H1 (cell line): ENCODE measurements at regions of chr6 and their contacts with region 1.

Region 1: DNA sequence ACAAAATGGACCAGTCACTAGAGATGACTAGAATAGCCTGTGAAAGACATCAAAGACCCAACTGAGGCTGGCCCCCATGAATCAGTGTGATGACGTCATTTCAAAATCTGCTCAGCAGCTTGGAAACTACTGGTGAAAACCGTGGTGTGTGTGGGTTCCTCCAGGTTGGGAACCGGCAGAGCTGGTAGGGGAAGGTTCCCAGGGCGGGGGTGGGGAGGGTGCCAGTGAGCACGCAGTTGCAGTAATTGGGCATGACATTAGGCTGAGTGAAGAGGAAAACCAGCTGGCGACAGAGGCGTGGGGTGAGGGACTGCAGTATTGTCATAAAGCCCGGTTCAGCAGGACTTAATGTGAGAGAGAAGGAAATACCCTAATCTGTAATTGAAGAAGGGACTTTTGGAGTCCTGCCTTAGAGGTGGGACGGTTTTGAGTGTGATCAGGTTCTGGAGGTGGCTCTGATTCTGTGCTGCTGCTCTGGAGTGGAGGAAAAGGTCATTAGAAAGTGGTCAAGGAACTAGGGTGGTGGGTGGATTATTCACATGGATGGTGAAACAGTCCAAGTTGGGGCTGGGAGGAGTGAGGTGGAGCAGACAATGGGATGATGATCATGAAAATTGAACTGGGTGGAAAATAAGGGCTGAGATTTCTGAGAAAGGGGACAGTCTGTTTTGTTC is 52.0 kb upstream of the MTHFD1L start:
- DNase-seq: no peak
- H3K4me3 ChIP-seq: no peak overlapping the region
- H3K27ac ChIP-seq: no peak overlapping the region
- H3K4me1 ChIP-seq: 0 out of 7 replicates have a peak, but pooled peaks cover 0 to 2% (median 0%) of the 10 kb centered on the region in 4 experiments
- H3K27me3 ChIP-seq: no peaks in the 10 kb centered on the region; a peak in 1 of 7 replicates
- CTCF ChIP-seq: no peak
- EP300 ChIP-seq: no peak
- POLR2A ChIP-seq: no peak
- RAD21 ChIP-seq: no peak

Region 2: GRCh38 chr6:150395398-150396009 is 418.0 kb before region 1 on chr6:
- CTCF ChIA-PET with region 1: interaction called, 21 read pairs
- POLR2A ChIA-PET with region 1: no interaction called
- DNase-seq: peak; percentile 51 to 53
- H3K4me3 ChIP-seq: no peak overlapping the region
- H3K27ac ChIP-seq: no peak overlapping the region
- H3K4me1 ChIP-seq: no peaks in the 10 kb centered on the region; a peak in 1 of 7 replicates
- H3K27me3 ChIP-seq: no peaks in the 10 kb centered on the region
- CTCF ChIP-seq: peak; percentile 43 to 79 (median 73)
- EP300 ChIP-seq: no peak
- POLR2A ChIP-seq: no peak
- RAD21 ChIP-seq: peak; percentile 83 to 90

Region 3: DNA sequence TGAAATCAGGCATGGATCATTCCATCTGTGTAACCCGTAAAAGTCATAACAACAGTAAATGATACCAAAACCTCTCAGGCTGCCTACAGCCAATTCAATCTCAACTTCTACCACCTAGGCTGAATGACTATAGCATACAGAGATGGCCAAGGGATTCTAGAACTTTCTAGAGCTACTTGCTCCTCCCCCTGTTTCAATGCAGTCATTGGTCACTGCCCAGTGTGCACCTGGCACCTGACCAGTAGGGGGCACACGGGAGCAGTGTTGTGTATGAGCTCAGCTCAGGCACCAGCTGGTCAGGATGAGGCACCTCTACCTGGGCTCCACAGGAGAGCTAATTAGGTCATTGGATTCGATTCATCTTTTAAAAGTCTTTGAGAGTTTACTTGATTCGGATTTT is 127.6 kb before region 1 on chr6:
- CTCF ChIA-PET with region 1: interaction called, 38 read pairs
- POLR2A ChIA-PET with region 1: interaction called, 3 read pairs
- DNase-seq: peak; percentile 64 to 89
- H3K4me3 ChIP-seq: no peak overlapping the region
- H3K27ac ChIP-seq: no peak overlapping the region
- H3K4me1 ChIP-seq: no peaks in the 10 kb centered on the region
- H3K27me3 ChIP-seq: no peaks in the 10 kb centered on the region
- CTCF ChIP-seq: peak; percentile 85 to 99 (median 99)
- EP300 ChIP-seq: no peak
- POLR2A ChIP-seq: no peak
- RAD21 ChIP-seq: peak; percentile 77 to 87

Region 4: DNA sequence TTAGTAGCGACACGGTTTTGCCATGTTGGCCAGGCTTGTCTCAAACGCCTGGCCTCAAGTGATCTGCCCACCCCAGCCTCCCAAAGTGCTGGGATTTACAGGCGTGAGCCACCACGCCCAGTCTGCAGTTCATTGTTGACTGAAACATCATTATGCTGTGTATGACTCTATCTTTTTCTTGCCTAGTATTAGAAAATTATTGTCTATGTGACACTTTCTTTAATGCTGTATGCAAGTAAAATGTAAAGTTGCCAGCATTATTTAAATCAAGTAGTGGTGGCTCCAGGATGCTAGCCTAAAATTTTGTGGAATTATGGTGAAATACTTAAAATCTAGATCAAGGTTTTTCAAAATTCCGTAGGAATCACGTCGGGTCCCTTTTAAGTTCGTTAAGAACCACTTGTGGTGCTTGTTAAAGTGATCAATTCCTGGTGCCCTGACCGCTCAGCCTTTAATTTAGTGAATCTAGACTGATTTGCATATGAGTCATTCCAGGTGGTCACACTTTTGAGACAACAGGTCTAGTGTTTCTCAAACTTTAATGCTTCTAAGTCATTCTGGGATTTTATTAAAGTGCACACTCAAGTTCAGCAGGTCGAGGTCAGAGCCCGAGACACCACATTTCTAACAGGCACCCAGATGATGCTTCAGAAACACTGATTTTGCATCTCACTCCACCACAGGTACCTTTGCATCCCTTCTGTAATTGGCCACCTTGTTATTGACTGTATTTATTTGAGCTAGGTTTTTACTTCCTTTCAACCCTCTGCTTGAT is 80.5 kb before region 1 on chr6:
- CTCF ChIA-PET with region 1: no interaction called
- POLR2A ChIA-PET with region 1: no interaction called
- DNase-seq: no peak
- H3K4me3 ChIP-seq: no peak overlapping the region
- H3K27ac ChIP-seq: no peak overlapping the region
- H3K4me1 ChIP-seq: no peaks in the 10 kb centered on the region
- H3K27me3 ChIP-seq: no peaks in the 10 kb centered on the region
- CTCF ChIP-seq: no peak
- EP300 ChIP-seq: no peak
- POLR2A ChIP-seq: no peak
- RAD21 ChIP-seq: no peak

Region 5: DNA sequence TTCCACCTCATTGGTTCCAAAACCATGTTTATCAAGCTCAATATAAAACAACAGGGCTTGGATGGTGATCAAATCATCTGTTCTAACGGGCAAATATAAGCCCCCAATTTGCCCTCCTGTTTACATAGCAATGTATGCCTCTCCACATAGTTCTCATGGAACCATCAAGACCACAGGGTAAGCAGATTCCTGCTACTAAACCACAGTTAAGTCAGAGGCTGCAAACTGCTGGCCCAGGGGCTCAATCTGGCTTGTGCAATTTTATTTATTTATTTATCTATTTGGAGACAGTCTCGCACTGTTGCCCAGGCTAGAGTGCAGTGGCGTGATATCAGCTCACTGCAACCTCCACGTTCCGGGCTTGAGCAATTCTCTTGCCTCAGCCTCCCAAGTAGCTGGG is 33.2 kb after region 1 on chr6:
- CTCF ChIA-PET with region 1: interaction called, 27 read pairs
- POLR2A ChIA-PET with region 1: no interaction called
- DNase-seq: no peak
- H3K4me3 ChIP-seq: no peak overlapping the region
- H3K27ac ChIP-seq: no peak overlapping the region
- H3K4me1 ChIP-seq: no peaks in the 10 kb centered on the region; a peak in 1 of 7 replicates
- H3K27me3 ChIP-seq: no peaks in the 10 kb centered on the region
- CTCF ChIP-seq: no peak
- EP300 ChIP-seq: no peak
- POLR2A ChIP-seq: no peak
- RAD21 ChIP-seq: no peak

Region 6: GRCh38 chr6:150876598-150876997 is 63.1 kb after region 1 on chr6:
- CTCF ChIA-PET with region 1: interaction called, 33 read pairs
- POLR2A ChIA-PET with region 1: interaction called, 3 read pairs
- DNase-seq: no peak
- H3K4me3 ChIP-seq: no peak overlapping the region
- H3K27ac ChIP-seq: no peak overlapping the region
- H3K4me1 ChIP-seq: peaks cover 2 to 21% (median 11%) of the 10 kb centered on the region in 4 experiments; a peak in 6 of 7 replicates
- H3K27me3 ChIP-seq: no peaks in the 10 kb centered on the region
- CTCF ChIP-seq: no peak
- EP300 ChIP-seq: no peak
- POLR2A ChIP-seq: no peak
- RAD21 ChIP-seq: no peak

Region 7: GRCh38 chr6:150928882-150929281 is 115.4 kb after region 1 on chr6:
- CTCF ChIA-PET with region 1: interaction called, 10 read pairs
- POLR2A ChIA-PET with region 1: no interaction called
- DNase-seq: no peak
- H3K4me3 ChIP-seq: no peak overlapping the region
- H3K27ac ChIP-seq: no peak overlapping the region
- H3K4me1 ChIP-seq: no peaks in the 10 kb centered on the region
- H3K27me3 ChIP-seq: no peaks in the 10 kb centered on the region
- CTCF ChIP-seq: peak; percentile 46 to 73 (median 68)
- EP300 ChIP-seq: no peak
- POLR2A ChIP-seq: no peak
- RAD21 ChIP-seq: peak; percentile 13 to 34; a peak in 2 of 4 replicates

Region 8: GRCh38 chr6:151044465-151045441 is 231.3 kb after region 1 on chr6:
- CTCF ChIA-PET with region 1: no interaction called
- POLR2A ChIA-PET with region 1: no interaction called
- DNase-seq: peak in 1 of 2 experiments; percentile 56
- H3K4me3 ChIP-seq: no peak overlapping the region
- H3K27ac ChIP-seq: no peak overlapping the region; the same call in 1 of the 2 replicates
- H3K4me1 ChIP-seq: peaks cover 8 to 18% (median 12%) of the 10 kb centered on the region in 4 experiments
- H3K27me3 ChIP-seq: no peaks in the 10 kb centered on the region
- CTCF ChIP-seq: no peak
- EP300 ChIP-seq: no peak
- POLR2A ChIP-seq: no peak
- RAD21 ChIP-seq: no peak